Right ventricle myocardium inferior (tissue), 1 donor: ENCODE measurements at regions of chr12 and their contacts with region 1.

Region 1: DNA sequence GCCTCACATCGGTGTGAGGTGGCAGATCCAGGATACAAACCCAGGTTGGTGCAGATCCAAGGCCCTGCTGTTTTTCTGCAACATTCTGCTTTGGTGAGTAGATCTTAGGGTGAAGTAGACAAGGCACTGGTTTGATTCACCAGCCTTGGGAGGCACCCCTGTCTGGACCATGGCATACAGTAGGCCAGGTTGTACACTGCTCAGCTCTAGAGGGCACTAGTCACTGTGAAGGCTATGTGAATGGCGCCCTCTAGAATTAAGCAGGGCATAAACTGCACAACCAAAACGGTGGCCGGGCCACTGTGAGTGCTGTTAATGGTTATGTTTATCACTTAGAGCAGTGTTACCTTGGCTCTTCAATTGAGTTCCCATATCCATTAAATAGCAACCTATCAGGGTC is 280.6 kb upstream of the PWP1 start:
- DNase-seq: no peak
- ATAC-seq: peak; percentile 51

Region 2: DNA sequence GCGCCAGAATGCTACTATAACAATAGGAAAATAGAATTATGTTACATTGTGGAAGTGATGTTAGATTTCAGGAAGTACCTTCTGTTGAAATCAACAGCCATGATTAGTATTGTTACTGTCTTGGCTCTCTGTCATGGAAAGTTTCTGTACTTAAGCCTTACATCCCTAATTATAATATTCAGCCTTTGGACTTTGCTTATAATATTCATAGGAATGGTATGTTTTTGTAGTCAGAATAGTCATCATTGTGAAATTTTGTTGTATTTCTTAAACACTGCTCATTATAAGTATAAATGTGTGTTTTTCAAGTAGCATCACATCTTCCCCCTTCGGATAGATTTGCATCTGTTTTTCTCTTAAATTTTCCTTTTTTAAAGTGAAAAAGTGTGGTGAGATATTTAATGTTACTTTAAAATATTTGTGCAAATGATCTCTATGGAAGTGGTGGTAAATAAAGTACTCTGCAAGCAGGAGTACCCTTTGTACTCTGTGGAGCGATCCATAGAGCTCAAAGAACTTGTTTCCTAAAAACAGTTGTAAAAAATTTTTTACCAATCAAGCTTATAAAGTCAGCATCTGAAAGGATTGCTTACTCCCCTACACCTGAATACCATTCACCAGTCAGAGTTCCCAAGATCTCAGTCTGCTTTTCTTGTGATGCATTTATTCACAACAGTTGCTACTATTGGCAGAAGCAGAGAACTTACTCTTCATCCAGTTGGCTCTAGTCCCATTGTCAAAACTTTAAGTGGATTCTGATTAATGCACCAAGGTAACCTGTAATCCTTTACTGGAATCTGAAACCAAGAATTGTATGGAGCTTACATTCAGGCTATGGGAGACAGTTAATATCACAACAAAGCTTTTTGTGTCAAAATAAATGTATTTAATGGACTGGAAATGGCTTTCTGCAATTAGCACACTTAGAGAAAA is 542.7 kb before region 1 on chr12:
- intact Hi-C with region 1: no loop called
- DNase-seq: no peak
- ATAC-seq: no peak

Region 3: GRCh38 chr12:107131832-107132616 is 273.0 kb before region 1 on chr12:
- intact Hi-C with region 1: loop called (anchors 5 kb)
- DNase-seq: no peak
- ATAC-seq: peak; percentile 16

Region 4: DNA sequence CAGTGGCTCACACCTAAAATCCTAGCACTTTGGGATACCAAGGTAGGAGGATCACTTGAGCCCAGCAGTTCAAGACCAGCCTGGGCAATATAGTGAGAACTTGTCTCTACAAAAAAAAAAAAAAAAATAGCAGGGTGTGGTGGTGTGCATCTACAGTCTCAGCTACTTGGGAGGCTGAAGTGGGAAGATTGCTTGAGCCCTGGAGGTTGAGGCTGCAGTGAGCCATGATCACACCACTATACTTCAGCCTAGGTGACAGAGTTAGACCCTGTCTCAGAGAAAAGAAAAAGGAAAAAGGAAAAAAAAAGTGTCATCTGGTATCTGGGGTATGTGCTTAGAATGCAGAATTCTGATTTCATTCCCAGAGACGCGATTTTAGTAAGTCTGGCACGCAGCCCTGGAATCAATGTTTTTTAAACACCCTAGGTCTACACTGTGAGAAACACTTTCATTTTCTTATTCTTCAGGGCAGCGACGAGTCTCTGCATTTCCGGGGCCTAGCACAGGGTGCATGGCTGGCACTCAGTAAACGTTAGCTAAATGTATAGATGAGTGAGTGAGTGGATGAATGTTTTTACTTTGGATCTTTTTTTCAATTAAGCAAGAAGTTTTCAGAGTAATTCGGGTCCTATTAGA is 36.8 kb after region 1 on chr12:
- intact Hi-C with region 1: no loop called
- DNase-seq: no peak
- ATAC-seq: no peak